H1 (cell line): ENCODE measurements at regions of chr1 and their contacts with region 1.

Region 1: DNA sequence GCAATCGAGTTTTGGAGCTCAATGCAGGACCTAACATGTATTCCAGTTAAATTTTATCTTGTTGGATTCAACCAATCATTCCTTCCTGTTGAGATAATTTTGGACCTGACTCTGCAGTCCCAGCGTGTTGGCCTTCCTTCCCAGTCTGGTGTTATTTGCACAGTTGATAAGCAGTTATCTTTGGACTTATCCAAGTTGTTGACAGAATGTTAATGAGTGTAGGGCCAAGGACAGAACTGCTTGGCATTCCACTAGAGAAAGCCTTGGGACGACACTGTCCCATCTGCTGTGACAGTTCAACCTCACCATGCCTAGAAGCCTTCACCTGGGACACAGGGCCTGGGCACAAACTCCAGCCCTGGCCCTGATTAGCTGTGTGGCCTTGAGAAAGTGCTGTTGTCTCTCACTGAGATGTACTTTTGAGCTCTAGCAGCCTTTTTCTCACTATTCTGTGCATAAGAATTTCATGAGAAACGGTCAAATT is 104.1 kb upstream of the SLC25A33 start:
- DNase-seq: no peak
- H3K4me3 ChIP-seq: no peak overlapping the region
- H3K27ac ChIP-seq: no peak overlapping the region
- H3K4me1 ChIP-seq: peaks cover 0 to 8% (median 2%) of the 10 kb centered on the region in 4 experiments; a peak in 2 of 7 replicates
- H3K27me3 ChIP-seq: no peaks in the 10 kb centered on the region
- CTCF ChIP-seq: no peak
- EP300 ChIP-seq: no peak
- POLR2A ChIP-seq: no peak
- RAD21 ChIP-seq: no peak

Region 2: DNA sequence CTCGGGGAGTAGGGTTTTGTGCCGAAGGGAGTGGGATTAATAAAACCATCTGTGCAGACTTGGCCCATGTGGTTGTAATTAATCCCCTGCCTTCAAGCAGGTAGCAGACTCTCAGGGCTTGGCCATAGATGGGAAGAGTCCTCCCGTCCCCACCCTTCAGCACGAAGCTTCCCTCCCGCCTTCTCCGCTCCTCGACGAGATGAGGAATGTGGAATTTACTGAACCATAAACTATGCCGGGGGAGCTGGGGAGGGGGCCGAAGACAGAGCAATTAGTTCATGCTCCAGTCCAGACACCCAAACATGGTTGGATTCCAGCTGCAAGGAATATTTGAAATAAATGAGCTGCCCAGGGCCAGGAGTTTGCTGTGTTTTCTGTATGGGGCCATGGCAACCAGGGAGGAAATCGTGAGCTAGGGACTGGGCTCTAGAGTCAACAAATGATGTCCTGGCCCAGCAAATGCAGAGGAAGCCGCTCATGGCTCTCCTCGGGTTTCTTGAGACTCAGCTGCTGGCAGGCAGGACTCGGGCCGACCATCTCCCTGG is 63.7 kb before region 1 on chr1:
- CTCF ChIA-PET with region 1: no interaction called
- POLR2A ChIA-PET with region 1: no interaction called
- DNase-seq: no peak
- H3K4me3 ChIP-seq: no peak overlapping the region
- H3K27ac ChIP-seq: no peak overlapping the region
- H3K4me1 ChIP-seq: no peaks in the 10 kb centered on the region; a peak in 2 of 7 replicates
- H3K27me3 ChIP-seq: no peaks in the 10 kb centered on the region
- CTCF ChIP-seq: no peak
- EP300 ChIP-seq: no peak
- POLR2A ChIP-seq: no peak
- RAD21 ChIP-seq: no peak

Region 3: DNA sequence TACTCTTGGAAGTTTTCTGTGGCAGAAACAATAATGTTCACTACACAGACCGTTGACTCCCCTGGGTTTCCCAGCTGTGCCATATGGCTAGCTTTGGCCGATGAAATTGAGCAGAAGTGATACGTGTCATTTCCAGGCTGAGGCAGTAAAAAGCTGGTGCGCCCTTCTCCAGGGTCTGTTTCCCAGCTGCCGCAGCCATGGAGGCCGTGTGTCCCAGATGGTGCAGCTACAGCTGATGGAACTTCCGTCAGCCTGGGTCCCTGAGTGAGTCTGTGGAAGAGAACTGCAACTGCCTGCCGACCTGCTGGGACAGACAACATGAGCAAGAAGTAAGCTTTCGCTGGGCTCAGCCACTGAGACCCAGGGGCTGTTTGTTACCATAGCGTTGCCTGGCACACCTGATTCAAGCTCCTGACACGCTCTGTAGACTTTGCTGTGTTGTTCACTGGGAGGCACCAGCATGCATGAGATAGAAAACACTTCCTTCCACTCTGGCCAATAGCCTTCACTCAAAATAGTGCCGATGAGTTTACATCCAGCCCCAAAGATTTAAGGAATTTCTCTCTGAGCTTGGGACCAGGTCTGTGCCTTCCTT is 12.2 kb before region 1 on chr1:
- CTCF ChIA-PET with region 1: interaction called, 15 read pairs
- POLR2A ChIA-PET with region 1: no interaction called
- DNase-seq: no peak
- H3K4me3 ChIP-seq: no peak overlapping the region
- H3K27ac ChIP-seq: no peak overlapping the region
- H3K4me1 ChIP-seq: no peaks in the 10 kb centered on the region
- H3K27me3 ChIP-seq: no peaks in the 10 kb centered on the region
- CTCF ChIP-seq: no peak
- EP300 ChIP-seq: no peak
- POLR2A ChIP-seq: no peak
- RAD21 ChIP-seq: no peak